ENCODE measurements at regions of chr16 and their contacts with region 1.

Region 1: DNA sequence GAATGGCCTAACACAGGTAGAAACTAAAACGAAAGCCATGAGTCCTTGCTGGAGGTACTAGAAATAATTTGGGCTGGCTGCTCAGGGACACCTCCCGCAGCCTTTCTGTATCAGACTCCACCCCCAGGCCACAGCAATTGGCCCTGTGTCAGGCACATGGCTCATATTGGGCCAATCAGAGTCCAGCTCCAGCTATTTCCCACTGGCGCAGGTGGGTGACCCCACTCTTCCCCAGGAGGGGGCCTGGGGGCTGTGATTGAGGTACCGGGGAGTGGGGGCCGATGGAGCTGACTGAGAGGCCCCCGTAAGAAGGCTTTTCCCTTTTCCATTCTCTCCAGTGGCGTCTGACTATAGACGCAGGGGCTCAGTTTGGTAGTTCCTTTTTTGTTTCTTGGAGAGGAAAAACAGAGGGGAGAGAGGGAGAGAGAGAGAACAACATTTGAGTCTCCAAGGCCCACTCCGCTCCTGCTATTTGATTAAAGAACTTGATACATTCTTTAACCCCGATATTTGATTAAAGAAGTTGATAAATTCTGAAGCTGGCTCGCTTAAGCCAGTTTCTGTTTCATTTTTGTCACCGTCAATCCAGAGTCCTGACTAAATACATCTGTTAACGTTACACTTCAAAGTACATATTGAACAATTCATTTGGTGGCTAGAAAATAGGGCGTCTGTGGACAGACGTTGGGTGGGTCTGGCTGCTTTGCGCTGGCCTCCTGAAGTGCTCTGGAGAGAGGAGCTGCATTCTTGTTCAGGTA is 26.3 kb downstream of the FOXL1 start:
- DNase-seq: peak; percentile 43
- H3K4me3 Mint-ChIP-seq: peak overlapping the region; percentile 83
- H3K27ac Mint-ChIP-seq: peak overlapping the region; percentile 6
- H3K4me1 Mint-ChIP-seq: peaks cover 12% of the 10 kb centered on the region
- H3K27me3 Mint-ChIP-seq: peaks cover 8% of the 10 kb centered on the region

Region 2: DNA sequence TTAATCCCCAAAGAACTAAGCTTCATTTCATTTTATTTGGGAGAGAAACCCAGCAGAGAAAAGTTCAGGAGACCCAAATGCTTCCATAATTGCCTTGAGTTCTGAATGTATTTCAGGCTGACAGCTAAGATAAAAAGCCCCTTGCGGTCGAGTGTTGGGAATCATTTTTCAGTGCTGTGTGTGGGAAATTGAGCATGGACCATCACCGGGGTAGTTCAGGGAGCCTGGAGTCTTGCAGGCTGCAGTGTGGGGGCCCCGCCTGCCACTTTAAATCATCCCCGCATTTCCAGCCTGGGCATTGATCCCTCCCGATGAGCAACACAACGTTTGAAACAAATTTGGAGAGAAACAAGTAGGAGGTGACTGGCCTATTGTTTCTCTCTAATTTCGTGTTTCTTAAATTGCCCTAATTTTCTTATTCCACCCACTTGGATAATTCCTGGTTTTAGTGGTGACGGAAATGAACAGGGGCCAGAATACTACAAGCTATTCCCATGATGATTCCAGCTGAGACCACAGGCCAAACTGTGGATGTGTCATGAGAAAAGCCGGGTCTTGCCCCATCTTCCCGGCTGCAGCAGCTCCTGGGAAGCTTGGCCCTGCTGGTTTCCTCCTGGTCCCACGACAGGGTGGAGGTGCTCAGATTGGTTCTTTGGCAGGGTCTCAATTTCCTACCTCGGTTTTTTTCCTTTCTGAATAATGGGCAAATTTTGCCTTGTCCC is 48.8 kb after region 1 on chr16:
- intact Hi-C with region 1: no loop called
- DNase-seq: no peak
- H3K4me3 Mint-ChIP-seq: no peak overlapping the region
- H3K27ac Mint-ChIP-seq: no peak overlapping the region
- H3K4me1 Mint-ChIP-seq: no peaks in the 10 kb centered on the region
- H3K27me3 Mint-ChIP-seq: peaks cover 5% of the 10 kb centered on the region

Region 3: GRCh38 chr16:86664533-86665318 is 60.1 kb after region 1 on chr16:
- intact Hi-C with region 1: loop called (anchors 1 kb)
- DNase-seq: peak; percentile 60
- H3K4me3 Mint-ChIP-seq: peak overlapping the region; percentile 41
- H3K27ac Mint-ChIP-seq: peak overlapping the region; percentile 92
- H3K4me1 Mint-ChIP-seq: peaks cover 35% of the 10 kb centered on the region
- H3K27me3 Mint-ChIP-seq: no peaks in the 10 kb centered on the region

Region 4: DNA sequence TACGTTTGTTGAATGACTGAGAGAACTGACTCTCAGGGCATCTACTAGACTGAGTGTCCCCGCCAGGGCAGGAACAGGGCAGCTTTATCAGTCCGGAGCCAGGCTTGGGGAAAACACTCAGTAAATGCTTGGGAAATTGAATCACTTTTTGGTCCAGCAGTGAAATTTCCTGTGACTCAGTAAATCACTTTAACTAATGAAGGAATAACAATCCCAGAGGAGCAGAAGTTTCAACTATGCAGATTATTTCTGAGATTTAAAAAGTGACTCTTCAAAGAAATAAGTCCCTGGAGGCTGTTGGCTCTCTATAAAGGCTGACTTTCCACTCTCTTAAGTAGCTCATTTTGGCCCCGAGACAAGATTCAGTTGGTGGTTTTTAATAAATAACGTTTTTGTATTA is 75.5 kb after region 1 on chr16:
- intact Hi-C with region 1: no loop called
- DNase-seq: no peak
- H3K4me3 Mint-ChIP-seq: no peak overlapping the region
- H3K27ac Mint-ChIP-seq: no peak overlapping the region
- H3K4me1 Mint-ChIP-seq: no peaks in the 10 kb centered on the region
- H3K27me3 Mint-ChIP-seq: peaks cover 4% of the 10 kb centered on the region

Region 5: DNA sequence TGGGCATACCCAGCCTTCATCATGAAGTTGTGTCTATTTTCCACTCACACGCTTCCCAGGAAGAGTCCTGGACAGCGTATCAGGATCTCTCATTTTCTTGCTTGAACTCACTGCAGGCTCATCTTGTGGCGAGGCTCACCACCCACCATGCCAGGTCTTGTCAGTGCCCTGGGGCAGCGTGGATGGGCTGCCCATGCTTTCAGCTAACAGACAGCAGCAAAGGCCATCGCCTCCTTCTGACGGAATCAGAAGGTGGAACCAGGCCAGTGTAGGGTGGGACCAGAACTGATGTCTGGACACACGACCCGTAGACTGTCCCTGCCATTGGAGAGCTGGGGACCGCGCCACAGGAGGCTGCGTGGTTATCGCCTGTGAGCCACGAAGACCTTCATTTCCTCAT is 143.1 kb after region 1 on chr16:
- intact Hi-C with region 1: loop called (anchors 5 kb)
- DNase-seq: no peak
- H3K4me3 Mint-ChIP-seq: no peak overlapping the region
- H3K27ac Mint-ChIP-seq: no peak overlapping the region
- H3K4me1 Mint-ChIP-seq: no peaks in the 10 kb centered on the region
- H3K27me3 Mint-ChIP-seq: peaks cover 5% of the 10 kb centered on the region